ENCODE measurements at regions of chr15 and their contacts with region 1.

Region 1: GRCh38 chr15:92788196-92788595 is 111.9 kb upstream of the CHD2 start:
- DNase-seq: no peak
- CTCF ChIP-seq: no peak

Region 2: DNA sequence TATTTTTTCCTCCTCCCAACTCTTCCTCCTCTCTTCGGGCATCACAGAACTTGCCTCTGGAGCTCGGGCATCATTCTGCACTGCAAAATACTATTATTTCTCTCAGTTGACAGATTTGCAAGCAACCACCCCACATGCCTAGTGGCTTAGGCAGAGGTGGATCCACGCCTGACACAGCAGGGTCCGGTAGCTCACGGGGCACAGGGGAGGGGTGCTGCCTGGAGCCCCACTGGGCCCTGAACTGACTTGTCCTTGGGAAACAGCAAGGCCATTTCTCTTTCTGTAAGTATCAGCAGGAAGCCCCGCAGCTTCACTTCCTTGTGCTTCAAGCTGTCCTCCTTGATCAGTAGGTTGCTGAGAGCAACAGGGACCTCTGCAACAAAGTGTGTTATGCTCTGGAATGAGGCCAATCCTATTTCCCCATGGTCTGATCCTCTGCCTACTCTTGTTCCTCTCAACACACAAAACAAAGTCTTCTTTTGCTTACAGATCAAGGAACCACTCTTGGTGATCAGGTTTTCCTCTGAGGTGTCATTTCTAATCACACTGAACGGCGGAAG is 201.7 kb before region 1 on chr15:
- CTCF ChIA-PET with region 1: no interaction called
- POLR2A ChIA-PET with region 1: no interaction called
- DNase-seq: no peak
- CTCF ChIP-seq: no peak

Region 3: DNA sequence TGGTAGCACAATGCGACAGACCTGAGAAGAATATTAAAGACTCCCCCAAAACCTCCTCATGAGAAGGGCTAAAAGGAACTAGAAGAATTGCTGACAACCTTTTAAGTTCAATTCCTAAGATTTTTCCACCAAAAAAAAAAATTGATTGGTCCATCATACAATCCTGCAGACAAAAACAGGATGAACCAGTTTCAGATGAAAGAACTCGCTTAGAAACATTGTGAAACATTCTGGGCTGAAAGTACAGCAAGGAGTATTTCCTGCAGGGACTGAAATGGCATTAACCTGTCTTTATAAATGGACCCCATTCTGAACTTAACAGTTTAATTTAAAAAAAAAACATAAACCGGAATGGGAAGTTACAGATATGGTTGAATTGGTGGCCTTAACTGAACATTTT is 36.7 kb before region 1 on chr15:
- CTCF ChIA-PET with region 1: no interaction called
- POLR2A ChIA-PET with region 1: no interaction called
- DNase-seq: no peak
- CTCF ChIP-seq: no peak

Region 4: DNA sequence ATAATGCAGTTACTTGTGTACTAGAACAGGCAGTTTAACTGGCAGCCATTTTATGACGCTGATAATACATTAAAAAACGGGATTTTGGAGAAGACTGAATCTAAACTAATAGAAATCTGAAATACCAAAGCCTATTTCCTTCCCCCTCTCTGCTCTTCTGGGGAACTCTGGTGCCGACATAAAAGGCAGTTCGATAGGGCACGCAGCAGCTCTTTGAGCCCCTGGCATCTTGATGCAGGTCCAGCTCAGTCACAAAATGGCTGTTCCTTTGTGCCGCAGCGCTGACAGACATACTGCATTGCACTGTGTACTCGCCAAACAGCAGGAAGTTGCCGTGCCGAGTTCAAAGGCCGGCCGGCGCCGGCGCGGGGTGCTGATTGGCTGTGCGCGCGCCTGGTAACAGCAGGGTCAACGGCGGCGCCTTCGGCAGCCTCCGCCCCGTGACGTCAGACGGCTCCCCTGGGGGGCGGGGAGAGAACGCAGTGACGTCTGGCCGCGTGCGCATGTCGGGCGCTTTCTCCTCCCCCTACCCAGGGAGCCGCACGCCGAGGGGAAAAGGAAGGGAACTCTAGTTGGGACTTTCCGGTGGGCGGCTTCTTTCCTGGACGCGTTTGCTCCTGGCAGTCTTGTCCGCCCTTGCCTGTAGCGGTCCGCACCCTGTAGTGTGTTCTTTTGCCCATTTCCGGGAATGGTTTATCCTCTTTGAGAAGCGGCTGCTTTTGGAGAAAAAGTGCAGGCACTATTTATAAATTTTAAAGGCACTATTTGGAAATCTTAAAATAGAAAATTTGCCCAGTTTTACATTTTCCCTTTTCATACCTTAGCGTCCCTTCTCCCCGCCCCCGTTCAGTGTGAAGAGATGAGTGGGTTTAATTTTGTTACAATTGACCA is 116.0 kb after region 1 on chr15:
- CTCF ChIA-PET with region 1: no interaction called
- POLR2A ChIA-PET with region 1: no interaction called
- DNase-seq: peak; percentile 90
- CTCF ChIP-seq: no peak

Region 5: DNA sequence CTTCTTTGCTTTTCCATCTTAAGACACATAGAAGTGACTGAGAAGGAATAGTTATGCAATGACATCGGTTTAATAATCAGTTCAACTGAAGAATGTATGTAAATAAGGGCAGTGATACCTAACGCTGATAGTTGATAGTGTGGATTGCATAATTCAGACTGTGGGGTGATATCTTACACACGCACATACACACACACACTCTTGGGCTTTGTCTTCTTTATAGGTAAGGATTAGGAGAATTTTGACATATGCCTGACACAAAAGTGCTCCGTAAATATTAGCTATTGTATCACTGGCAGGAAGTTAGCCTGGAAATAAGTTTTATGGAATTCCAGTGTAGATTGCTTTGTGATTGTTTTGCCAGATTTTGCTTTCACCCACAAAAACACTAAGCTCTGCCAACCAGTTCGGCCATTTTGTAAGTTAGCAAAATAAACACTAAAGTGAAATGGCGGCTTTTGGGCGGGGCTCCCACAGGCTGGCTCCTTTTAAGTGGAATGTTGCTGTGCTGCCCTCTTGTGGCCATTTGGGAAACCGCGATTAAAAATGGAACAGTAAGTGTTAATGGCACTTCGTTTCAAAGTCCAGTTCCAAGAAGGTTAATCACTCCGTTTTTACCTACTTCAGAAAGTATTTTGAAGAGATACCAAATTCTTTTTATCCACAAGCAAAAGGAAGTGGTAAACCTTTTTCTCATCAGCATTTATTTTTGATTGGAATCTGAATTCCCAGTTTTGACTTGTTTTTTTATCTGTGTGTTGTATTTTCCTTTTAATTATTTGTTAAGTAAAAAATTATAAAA is 129.6 kb after region 1 on chr15:
- CTCF ChIA-PET with region 1: interaction called, 10 read pairs
- POLR2A ChIA-PET with region 1: no interaction called
- DNase-seq: peak; percentile 79
- CTCF ChIP-seq: peak; percentile 82

Region 6: GRCh38 chr15:93030430-93031105 is 242.4 kb after region 1 on chr15:
- CTCF ChIA-PET with region 1: interaction called, 18 read pairs
- POLR2A ChIA-PET with region 1: no interaction called
- DNase-seq: peak; percentile 87
- CTCF ChIP-seq: peak; percentile 81